A549 (cell line): ENCODE measurements at regions of chr20 and their contacts with region 1.

Region 1: DNA sequence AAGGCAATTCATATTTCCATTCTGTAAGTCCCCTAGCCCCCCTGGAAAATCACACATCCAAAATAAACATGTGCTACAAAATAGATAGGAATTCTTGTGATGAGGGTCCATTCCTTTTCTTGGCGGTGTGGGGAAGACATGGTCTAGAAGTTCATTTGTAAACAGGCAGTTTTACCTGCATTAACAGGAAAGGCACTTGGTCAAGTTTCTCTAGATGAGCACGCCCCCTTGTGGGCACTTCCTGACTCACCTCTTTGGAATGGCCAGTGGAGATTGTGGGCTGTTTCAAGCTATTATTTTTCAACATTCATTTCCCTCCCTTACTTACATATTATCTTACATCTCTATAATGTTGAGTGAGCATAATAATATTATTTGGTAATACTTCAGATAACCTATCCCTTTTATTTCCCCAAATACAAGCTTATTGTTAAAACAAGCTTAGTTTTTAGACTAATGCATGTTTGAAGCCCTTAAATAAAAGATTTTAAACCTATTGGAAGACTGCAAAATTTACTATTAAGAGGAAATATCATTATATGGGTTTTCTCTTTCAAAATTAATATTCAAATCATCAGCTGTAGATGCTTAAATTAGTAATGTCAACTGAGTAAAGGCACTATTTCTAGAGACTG is 92.1 kb downstream of the TASP1 start:
- DNase-seq: peak; percentile 51 to 83
- ATAC-seq: peak; percentile 80 to 94
- H3K4me3 ChIP-seq: no peak overlapping the region
- H3K27ac ChIP-seq: peak overlapping the region; percentile 34 to 63; a peak in 4 of 6 replicates
- H3K4me1 ChIP-seq: peaks cover 9% of the 10 kb centered on the region; the same call in 2 of the 3 replicates
- CTCF ChIP-seq: peak; percentile 98
- EP300 ChIP-seq: no peak
- POLR2A ChIP-seq: no peak
- RAD21 ChIP-seq: peak; percentile 97 to 98

Region 2: DNA sequence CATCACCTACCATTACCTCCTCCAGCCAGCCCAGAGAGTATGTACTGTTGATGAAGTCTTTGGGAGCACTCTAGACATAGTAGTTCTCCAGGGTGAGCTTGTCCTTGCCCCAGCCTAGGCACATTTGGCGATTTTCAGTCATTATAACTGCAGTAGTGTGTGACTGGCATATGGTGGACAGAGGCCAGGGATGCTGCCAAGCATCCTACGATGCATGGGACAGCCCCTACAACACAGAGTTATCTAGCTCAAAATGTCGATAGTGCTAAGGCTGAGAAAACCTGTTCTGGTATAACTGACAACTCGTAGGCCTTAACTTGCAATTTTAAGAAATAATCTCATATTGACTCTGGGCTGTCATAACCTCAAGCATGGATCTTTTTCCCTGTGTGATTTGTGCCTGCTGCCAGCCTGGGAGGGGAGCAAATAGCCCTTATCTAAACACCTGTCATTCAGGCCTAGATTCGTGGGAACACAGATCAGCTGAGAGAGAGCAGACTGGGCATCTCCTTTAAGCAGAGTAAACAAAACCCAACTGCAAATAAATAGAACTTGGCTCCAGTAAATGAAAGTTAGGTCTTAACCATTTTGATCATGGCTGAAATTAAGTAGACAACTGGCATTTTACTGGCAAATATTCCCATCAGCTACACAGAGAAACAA is 435.2 kb before region 1 on chr20:
- CTCF ChIA-PET with region 1: interaction called, 17 read pairs
- POLR2A ChIA-PET with region 1: no interaction called
- DNase-seq: no peak
- ATAC-seq: no peak
- H3K4me3 ChIP-seq: no peak overlapping the region
- H3K27ac ChIP-seq: no peak overlapping the region
- H3K4me1 ChIP-seq: no peaks in the 10 kb centered on the region
- CTCF ChIP-seq: no peak
- EP300 ChIP-seq: no peak
- POLR2A ChIP-seq: no peak
- RAD21 ChIP-seq: no peak

Region 3: GRCh38 chr20:13256606-13257005 is 290.0 kb before region 1 on chr20:
- CTCF ChIA-PET with region 1: interaction called, 12 read pairs
- POLR2A ChIA-PET with region 1: no interaction called
- DNase-seq: no peak
- ATAC-seq: no peak
- H3K4me3 ChIP-seq: no peak overlapping the region
- H3K27ac ChIP-seq: no peak overlapping the region
- H3K4me1 ChIP-seq: no peaks in the 10 kb centered on the region
- CTCF ChIP-seq: no peak
- EP300 ChIP-seq: no peak
- POLR2A ChIP-seq: no peak
- RAD21 ChIP-seq: no peak

Region 4: DNA sequence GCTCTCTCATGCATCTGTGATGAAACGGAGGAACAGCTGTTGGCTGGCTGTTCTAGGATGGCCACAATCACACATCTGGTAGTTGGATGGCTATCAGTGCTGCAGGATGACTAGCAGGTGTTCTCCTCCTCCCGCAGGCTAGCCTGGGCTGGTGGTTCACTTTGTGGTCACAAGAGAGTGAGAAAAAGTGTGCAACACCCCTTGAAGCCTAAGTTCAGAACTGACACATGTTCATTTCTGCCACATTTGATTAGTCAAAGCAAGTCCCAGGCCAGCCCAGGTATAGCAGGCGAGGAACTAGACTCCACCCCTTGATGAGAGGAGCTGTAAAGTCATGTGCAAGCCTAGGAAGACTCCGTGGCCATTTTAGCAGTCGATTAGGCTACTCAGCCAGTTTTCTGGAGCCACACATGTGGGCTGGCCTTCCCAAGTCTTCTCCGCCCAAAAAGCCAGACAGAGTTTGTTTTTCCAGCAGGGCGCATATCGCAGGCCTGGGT is 204.8 kb before region 1 on chr20:
- CTCF ChIA-PET with region 1: interaction called, 23 read pairs
- POLR2A ChIA-PET with region 1: no interaction called
- DNase-seq: no peak
- ATAC-seq: no peak
- H3K4me3 ChIP-seq: no peak overlapping the region
- H3K27ac ChIP-seq: peak overlapping the region in 1 of 2 experiments; percentile 69; a peak in 3 of 6 replicates
- H3K4me1 ChIP-seq: peaks cover 42% of the 10 kb centered on the region
- CTCF ChIP-seq: no peak
- EP300 ChIP-seq: no peak
- POLR2A ChIP-seq: no peak
- RAD21 ChIP-seq: no peak

Region 5: DNA sequence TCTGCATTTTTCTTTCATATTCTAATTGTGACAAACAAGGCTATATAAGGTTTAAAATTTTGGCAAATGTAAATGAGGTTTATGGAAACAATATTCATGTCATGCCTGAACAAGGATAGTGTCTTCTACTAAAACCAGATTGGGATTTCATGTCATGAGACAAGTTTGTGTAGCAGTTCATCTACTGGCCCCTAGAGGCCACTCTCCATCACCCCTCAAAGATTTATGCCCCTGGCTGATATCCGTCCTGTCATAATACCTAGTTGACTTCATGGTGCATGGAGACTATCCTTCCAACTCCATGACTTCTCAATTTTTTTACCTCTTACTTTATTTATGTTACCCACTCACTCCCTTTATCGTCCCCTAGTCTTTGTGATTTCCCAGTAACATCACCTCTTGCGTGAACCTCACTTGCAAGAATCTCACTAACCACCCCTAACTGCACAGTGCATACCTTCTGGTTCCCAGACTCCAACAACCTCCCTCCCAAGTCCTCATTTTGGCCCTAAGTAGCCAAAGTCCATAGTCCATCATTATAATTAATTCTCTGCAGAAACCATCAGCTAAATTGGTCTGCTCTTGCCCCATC is 87.7 kb before region 1 on chr20:
- CTCF ChIA-PET with region 1: interaction called, 40 read pairs
- POLR2A ChIA-PET with region 1: no interaction called
- DNase-seq: peak; percentile 41 to 59
- ATAC-seq: peak; percentile 80 to 87; a peak in 5 of 6 replicates
- H3K4me3 ChIP-seq: no peak overlapping the region
- H3K27ac ChIP-seq: no peak overlapping the region
- H3K4me1 ChIP-seq: peaks cover 8% of the 10 kb centered on the region; the same call in 2 of the 3 replicates
- CTCF ChIP-seq: peak; percentile 65
- EP300 ChIP-seq: no peak
- POLR2A ChIP-seq: no peak
- RAD21 ChIP-seq: peak; percentile 54 to 71; a peak in 4 of 5 replicates